Aorta (tissue), 5 donors: ENCODE measurements at regions of chr10 and their contacts with region 1.

Region 1: GRCh38 chr10:16883084-16883483 is 65.9 kb upstream of the RSU1 start:
- DNase-seq: no peak
- ATAC-seq: no peak
- H3K4me3 ChIP-seq: no peak overlapping the region
- H3K27ac ChIP-seq: no peak overlapping the region
- H3K4me1 ChIP-seq: no peaks in the 10 kb centered on the region
- H3K27me3 ChIP-seq: no peaks in the 10 kb centered on the region

Region 2: DNA sequence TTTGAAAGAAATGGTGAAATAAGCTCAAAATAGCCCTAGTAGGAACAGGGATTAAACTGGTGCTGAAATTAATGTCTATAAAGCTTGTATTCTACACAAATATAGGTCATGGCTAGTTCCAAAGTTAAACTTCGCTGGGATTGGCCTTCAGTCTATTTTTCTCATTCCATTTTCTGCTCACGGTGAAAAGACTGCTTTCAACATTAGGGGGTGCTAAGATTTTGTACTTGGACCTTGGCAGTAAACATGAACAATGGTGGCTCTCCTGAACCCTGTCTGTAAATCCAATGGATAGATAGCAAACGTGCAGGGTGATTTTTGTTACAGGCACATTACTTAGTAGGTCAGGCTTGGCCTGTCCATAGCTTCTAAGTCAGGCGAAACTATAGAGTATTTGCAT is 29.9 kb before region 1 on chr10:
- intact Hi-C with region 1: loop called in 1 of 2 experiments (anchors 2 kb)
- DNase-seq: no peak
- ATAC-seq: no peak
- H3K4me3 ChIP-seq: no peak overlapping the region
- H3K27ac ChIP-seq: peak overlapping the region in 1 of 2 donors; percentile 44
- H3K4me1 ChIP-seq: peaks cover 4 to 8% of the 10 kb centered on the region in 2 donors
- H3K27me3 ChIP-seq: no peaks in the 10 kb centered on the region